Activated naive CD4-positive, alpha-beta T cell treated with anti-CD3 and anti-CD28 coated beads, Interleukin-2, amount 10 ng/mL, durations not matched to agents 7 days and 5 days (primary cell): ENCODE measurements at regions of chr19 and their contacts with region 1.

Region 1: GRCh38 chr19:46840136-46840942 is 10.3 kb downstream of the AP2S1 start:
- DNase-seq: peak; percentile 73
- H3K4me3 Mint-ChIP-seq: no peak overlapping the region
- H3K27ac Mint-ChIP-seq: peak overlapping the region; percentile 14
- H3K4me1 Mint-ChIP-seq: peaks cover 4% of the 10 kb centered on the region
- H3K27me3 Mint-ChIP-seq: no peaks in the 10 kb centered on the region

Region 2: DNA sequence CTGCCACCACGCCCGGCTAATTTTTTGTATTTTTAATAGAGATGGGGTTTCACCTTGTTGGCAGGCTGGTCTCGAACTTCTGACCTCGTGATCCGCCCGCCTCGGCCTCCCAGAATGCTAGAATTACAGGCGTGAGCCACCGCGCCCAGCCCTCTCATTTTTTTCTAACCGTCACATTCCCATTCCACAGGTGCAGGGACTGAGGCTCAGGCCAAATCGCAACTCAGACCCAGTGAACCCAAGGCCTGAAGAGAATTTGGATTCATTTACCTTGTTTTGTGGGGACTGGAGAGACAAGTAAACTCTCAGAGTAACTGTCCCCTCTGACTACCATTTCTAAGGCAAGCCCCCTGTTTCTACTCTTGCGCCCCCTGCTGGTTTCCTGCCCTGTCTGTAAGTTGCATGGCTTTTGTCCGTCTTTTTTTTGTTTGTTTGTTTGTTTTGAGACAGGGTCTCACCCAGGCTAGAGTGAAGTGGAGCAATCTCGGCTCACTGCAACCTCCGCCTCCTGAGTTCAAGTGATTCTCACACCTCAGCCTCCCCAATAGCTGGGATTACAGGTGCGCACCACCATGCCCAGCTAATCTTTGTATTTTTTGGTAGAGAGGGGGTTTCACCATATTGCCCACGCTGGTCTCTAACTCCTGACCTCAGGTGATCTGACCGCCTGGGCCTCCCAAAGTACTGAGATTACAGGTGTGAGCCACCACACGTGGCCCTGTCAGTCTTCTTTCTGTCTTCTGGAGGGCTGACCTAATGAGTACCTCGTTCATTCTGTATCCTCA is 91.8 kb before region 1 on chr19:
- CTCF ChIA-PET with region 1: interaction called, 124 read pairs
- DNase-seq: peak; percentile 87
- H3K4me3 Mint-ChIP-seq: peak overlapping the region; percentile 51
- H3K27ac Mint-ChIP-seq: peak overlapping the region; percentile 28
- H3K4me1 Mint-ChIP-seq: peaks cover 42% of the 10 kb centered on the region
- H3K27me3 Mint-ChIP-seq: no peaks in the 10 kb centered on the region

Region 3: DNA sequence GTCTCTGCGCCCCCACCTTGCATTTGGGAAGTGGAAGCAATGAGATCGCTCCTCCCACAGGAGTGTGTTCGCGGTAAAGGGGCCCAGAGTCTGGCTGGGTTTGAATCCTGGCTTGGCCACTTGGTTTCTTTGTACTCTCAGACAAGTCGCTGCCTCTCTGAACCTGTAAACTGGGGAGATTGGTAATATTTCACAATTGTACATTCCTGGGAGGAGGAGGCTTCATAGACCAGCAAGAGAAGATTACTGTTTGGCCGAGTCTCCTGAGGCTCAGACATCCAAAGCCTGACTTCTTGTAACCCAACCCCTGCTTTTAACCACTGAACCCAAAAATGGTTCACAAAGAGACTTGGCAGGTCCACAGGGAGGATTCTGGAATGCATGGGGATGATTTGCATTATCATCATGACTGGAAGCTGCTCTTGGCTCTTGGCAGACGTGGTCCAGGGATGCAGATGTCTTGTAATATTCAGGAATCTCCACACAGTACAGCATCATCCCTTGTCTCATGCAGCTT is 80.5 kb before region 1 on chr19:
- CTCF ChIA-PET with region 1: interaction called, 124 read pairs
- DNase-seq: no peak
- H3K4me3 Mint-ChIP-seq: no peak overlapping the region
- H3K27ac Mint-ChIP-seq: no peak overlapping the region
- H3K4me1 Mint-ChIP-seq: peaks cover 3% of the 10 kb centered on the region
- H3K27me3 Mint-ChIP-seq: no peaks in the 10 kb centered on the region

Region 4: DNA sequence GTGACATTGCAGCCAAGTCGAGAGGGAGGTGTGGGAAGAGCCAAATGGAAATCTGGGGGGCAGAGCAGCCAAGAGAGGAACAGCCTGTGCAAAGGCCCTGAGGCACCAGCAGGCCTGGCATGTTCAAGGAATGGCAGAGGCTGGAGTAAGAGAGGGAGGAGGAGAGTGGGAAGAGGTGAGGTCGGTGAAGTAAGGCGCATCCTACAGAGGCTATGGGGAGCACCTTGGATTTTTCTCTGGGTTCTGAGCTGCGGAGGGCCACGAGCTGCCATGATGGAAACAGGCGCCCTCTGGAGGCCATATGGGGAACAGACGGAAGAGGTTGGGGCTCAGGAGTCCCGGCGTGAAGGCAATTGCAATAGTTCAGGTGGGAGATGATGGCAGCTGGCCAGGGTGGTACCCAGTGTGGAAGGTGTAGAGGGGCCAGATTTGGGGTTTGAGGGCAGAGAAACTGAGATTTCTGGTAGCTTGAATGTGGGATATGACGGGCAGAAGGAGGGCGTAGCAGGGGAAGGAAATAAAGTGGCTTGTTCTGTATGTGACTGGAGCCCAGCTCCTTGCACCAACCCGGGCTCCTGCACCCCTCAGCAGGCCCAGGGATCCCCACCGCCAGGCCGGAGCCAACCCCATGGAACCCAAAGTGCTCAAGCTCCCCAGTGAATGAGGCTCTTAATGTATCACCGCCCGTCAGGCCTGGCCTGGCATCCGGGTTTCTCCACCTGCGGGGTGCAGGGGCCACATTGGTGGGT is 73.6 kb before region 1 on chr19:
- CTCF ChIA-PET with region 1: interaction called, 17 read pairs
- DNase-seq: peak; percentile 76
- H3K4me3 Mint-ChIP-seq: no peak overlapping the region
- H3K27ac Mint-ChIP-seq: no peak overlapping the region
- H3K4me1 Mint-ChIP-seq: peaks cover 5% of the 10 kb centered on the region
- H3K27me3 Mint-ChIP-seq: peaks cover 4% of the 10 kb centered on the region

Region 5: GRCh38 chr19:46813839-46814363 is 26.4 kb before region 1 on chr19:
- CTCF ChIA-PET with region 1: no interaction called
- DNase-seq: no peak
- H3K4me3 Mint-ChIP-seq: no peak overlapping the region
- H3K27ac Mint-ChIP-seq: no peak overlapping the region
- H3K4me1 Mint-ChIP-seq: peaks cover 2% of the 10 kb centered on the region
- H3K27me3 Mint-ChIP-seq: peaks cover 26% of the 10 kb centered on the region